ENCODE measurements at regions of chr3 and their contacts with region 1.

Region 1: DNA sequence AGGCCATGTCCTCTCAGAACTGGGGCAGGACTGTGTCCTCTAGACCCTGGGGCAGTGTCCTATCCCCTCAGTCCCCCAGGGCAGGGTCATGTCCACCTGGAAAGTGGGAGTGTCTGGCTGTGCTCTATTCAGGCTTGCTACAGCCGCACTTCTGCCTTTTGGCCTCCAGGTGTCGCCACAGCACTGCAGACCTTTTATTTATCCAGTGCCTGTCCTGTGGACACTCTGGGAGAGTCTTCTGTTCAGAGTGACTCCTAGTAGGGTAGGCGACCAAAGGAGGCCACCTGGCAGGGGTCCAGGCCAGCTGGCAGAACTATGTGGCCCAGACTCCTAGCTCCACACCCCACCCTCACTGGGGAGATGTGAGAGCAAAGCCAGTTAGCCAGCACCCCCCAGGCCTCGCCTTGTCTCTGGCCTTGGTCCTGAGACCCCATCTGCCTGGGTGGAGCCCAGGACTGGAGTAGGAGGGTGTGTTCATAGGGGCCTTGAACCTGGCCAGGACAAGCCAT is 3.9 kb downstream of the TMIE start:
- ATAC-seq: peak; percentile 50 to 93 (median 58)
- H3K4me3 ChIP-seq: no peak overlapping the region
- H3K27ac ChIP-seq: no peak overlapping the region
- H3K4me1 ChIP-seq: peaks cover 17 to 29% of the 10 kb centered on the region in 2 donors

Region 2: GRCh38 chr3:46895204-46895660 is 190.2 kb after region 1 on chr3:
- in situ Hi-C with region 1: loop called in 7 of 9 experiments (anchors 25 kb)
- ATAC-seq: peak in 3 of 8 experiments; percentile 14 to 62 (median 29)
- H3K4me3 ChIP-seq: no peak overlapping the region
- H3K27ac ChIP-seq: no peak overlapping the region
- H3K4me1 ChIP-seq: peaks cover 11 to 14% of the 10 kb centered on the region in 2 donors

Region 3: GRCh38 chr3:46909535-46910442 is 204.7 kb after region 1 on chr3:
- in situ Hi-C with region 1: loop called in 2 of 9 experiments (anchors 25 kb)
- ATAC-seq: peak; percentile 83 to 96 (median 93)
- H3K4me3 ChIP-seq: no peak overlapping the region
- H3K27ac ChIP-seq: no peak overlapping the region
- H3K4me1 ChIP-seq: peaks cover 0 to 2% of the 10 kb centered on the region in 2 donors

Region 4: GRCh38 chr3:47324278-47324865 is 619.3 kb after region 1 on chr3:
- in situ Hi-C with region 1: loop called in 1 of 9 experiments (anchors 25 kb)
- ATAC-seq: peak; percentile 84 to 98 (median 95)
- H3K4me3 ChIP-seq: no peak overlapping the region
- H3K27ac ChIP-seq: no peak overlapping the region
- H3K4me1 ChIP-seq: no peaks in the 10 kb centered on the region

Region 5: GRCh38 chr3:47370887-47371697 is 666.0 kb after region 1 on chr3:
- in situ Hi-C with region 1: loop called in 1 of 9 experiments (anchors 25 kb)
- ATAC-seq: peak in 6 of 8 experiments; percentile 21 to 73 (median 34)
- H3K4me3 ChIP-seq: no peak overlapping the region
- H3K27ac ChIP-seq: no peak overlapping the region
- H3K4me1 ChIP-seq: no peaks in the 10 kb centered on the region

Measured in motor neuron (in vitro differentiated cells).